HCT116 (cell line): ENCODE measurements at regions of chr17 and their contacts with region 1.

Region 1: GRCh38 chr17:58121925-58122324 is 26.3 kb upstream of the OR4D1 start:
- DNase-seq: peak; percentile 59
- ATAC-seq: peak; percentile 86
- H3K4me3 ChIP-seq: no peak overlapping the region
- H3K27ac ChIP-seq: no peak overlapping the region
- H3K4me1 ChIP-seq: no peaks in the 10 kb centered on the region
- H3K27me3 ChIP-seq: peaks cover 31% of the 10 kb centered on the region
- CTCF ChIP-seq: peak; percentile 55 to 93 (median 73)
- POLR2A ChIP-seq: no peak
- RAD21 ChIP-seq: peak; percentile 89

Region 2: GRCh38 chr17:58172369-58173071 is 50.6 kb after region 1 on chr17:
- CTCF ChIA-PET with region 1: interaction called, 27 read pairs
- POLR2A ChIA-PET with region 1: no interaction called
- RAD21 ChIA-PET with region 1: interaction called, 3 read pairs
- intact Hi-C with region 1: loop called (anchors 1 kb)
- DNase-seq: peak; percentile 79
- ATAC-seq: peak; percentile 97
- H3K4me3 ChIP-seq: no peak overlapping the region
- H3K27ac ChIP-seq: no peak overlapping the region
- H3K4me1 ChIP-seq: 0 out of 4 replicates have a peak, but pooled peaks cover 0 to 2% of the 10 kb centered on the region in 2 experiments
- H3K27me3 ChIP-seq: peaks cover 26% of the 10 kb centered on the region
- CTCF ChIP-seq: peak; percentile 85 to 94 (median 92)
- POLR2A ChIP-seq: no peak
- RAD21 ChIP-seq: peak; percentile 91

Region 3: DNA sequence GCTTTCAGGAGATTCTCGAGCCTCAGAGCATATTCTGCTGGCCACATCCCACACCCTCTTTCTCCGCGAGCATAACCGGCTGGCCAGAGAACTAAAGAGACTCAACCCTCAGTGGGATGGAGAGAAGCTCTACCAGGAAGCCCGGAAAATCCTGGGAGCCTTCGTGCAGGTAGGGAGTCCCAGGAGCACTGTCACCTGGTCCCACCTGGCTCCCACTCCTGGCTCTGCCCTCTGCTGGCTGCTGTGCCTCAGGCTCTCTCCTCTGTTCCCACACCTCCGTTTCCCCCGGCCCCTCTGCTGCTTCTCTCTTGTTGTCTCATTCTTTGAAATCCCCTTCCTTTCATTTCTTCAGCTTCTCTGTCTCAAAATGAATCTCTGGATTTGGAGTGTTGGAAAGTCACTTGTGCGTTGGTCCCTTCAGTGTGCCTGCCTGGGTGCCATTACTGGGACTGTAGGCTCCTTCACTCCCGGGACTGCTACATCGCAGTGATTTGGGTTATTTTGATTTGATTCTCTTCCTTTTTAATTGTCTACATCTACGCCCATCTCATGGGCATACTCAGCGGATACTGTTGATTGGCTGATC is 133.0 kb after region 1 on chr17:
- CTCF ChIA-PET with region 1: interaction called, 10 read pairs
- POLR2A ChIA-PET with region 1: no interaction called
- RAD21 ChIA-PET with region 1: no interaction called
- intact Hi-C with region 1: loop called (anchors 5 kb)
- DNase-seq: peak; percentile 22
- ATAC-seq: peak; percentile 95
- H3K4me3 ChIP-seq: no peak overlapping the region
- H3K27ac ChIP-seq: no peak overlapping the region
- H3K4me1 ChIP-seq: peaks cover 0 to 6% of the 10 kb centered on the region in 2 experiments; a peak in 2 of 4 replicates
- H3K27me3 ChIP-seq: peaks cover 21% of the 10 kb centered on the region
- CTCF ChIP-seq: peak; percentile 50 to 90 (median 76); a peak in 5 of 6 replicates
- POLR2A ChIP-seq: no peak
- RAD21 ChIP-seq: peak; percentile 45